MCF 10A (cell line): ENCODE measurements at regions of chr3 and their contacts with region 1.

Region 1: GRCh38 chr3:56988458-56989168 is 71.9 kb upstream of the SPATA12 start:
- DNase-seq: peak; percentile 83
- H3K4me3 Mint-ChIP-seq: no peak overlapping the region
- H3K27ac Mint-ChIP-seq: no peak overlapping the region
- H3K4me1 Mint-ChIP-seq: no peaks in the 10 kb centered on the region
- H3K27me3 Mint-ChIP-seq: no peaks in the 10 kb centered on the region
- CTCF ChIP-seq: peak; percentile 81

Region 2: GRCh38 chr3:56339671-56340070 is 648.9 kb before region 1 on chr3:
- CTCF ChIA-PET with region 1: interaction called, 4 read pairs
- POLR2A ChIA-PET with region 1: no interaction called
- intact Hi-C with region 1: loop called (anchors 2 kb)
- DNase-seq: no peak
- H3K4me3 Mint-ChIP-seq: no peak overlapping the region
- H3K27ac Mint-ChIP-seq: no peak overlapping the region
- H3K4me1 Mint-ChIP-seq: peaks cover 6% of the 10 kb centered on the region
- H3K27me3 Mint-ChIP-seq: peaks cover 24% of the 10 kb centered on the region
- CTCF ChIP-seq: no peak

Region 3: GRCh38 chr3:56702490-56703315 is 285.9 kb before region 1 on chr3:
- CTCF ChIA-PET with region 1: interaction called, 234 read pairs
- POLR2A ChIA-PET with region 1: interaction called, 20 read pairs
- intact Hi-C with region 1: loop called (anchors 1 kb)
- DNase-seq: peak; percentile 77
- H3K4me3 Mint-ChIP-seq: no peak overlapping the region
- H3K27ac Mint-ChIP-seq: no peak overlapping the region
- H3K4me1 Mint-ChIP-seq: no peaks in the 10 kb centered on the region
- H3K27me3 Mint-ChIP-seq: no peaks in the 10 kb centered on the region
- CTCF ChIP-seq: peak; percentile 75

Region 4: DNA sequence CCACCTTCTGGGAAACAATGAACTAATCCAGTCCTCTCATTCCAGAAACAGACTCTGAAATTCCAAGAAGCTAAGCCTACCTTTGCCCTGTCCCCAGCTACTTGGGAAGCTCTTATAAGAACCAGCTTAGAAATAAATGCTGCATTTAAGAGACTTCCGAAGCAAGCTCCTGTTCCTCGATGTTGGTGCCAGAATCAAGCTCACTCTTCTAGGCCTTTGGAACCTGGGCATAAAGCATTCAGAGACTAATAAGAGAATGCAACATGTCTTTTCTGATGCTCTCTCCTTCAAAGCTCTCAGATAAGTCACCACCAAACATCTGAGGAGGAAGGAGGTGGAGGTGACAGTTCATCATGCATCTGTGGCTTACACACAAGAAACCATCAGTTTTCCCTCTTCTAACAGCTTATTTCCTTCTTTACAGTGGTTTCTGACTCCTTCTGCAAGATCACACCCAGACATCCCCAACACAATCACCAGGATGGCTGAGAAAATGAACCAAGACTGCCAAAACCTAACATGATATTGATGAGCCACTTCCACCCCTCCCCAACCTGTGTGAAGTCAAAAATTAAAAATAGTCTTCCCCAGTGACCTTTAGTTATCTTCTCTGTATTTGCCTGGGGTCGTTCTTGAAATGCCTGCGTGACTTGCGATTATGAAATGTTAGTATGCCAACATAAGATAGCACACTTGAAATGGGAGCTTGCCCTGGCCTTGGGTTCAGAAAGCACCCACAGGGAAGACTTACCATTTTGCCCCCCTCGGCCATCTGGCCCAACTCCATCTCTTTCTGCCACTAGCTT is 198.4 kb before region 1 on chr3:
- CTCF ChIA-PET with region 1: interaction called, 170 read pairs
- POLR2A ChIA-PET with region 1: no interaction called
- intact Hi-C with region 1: no loop called
- DNase-seq: no peak
- H3K4me3 Mint-ChIP-seq: no peak overlapping the region
- H3K27ac Mint-ChIP-seq: no peak overlapping the region
- H3K4me1 Mint-ChIP-seq: peaks cover 25% of the 10 kb centered on the region
- H3K27me3 Mint-ChIP-seq: no peaks in the 10 kb centered on the region
- CTCF ChIP-seq: no peak

Region 5: DNA sequence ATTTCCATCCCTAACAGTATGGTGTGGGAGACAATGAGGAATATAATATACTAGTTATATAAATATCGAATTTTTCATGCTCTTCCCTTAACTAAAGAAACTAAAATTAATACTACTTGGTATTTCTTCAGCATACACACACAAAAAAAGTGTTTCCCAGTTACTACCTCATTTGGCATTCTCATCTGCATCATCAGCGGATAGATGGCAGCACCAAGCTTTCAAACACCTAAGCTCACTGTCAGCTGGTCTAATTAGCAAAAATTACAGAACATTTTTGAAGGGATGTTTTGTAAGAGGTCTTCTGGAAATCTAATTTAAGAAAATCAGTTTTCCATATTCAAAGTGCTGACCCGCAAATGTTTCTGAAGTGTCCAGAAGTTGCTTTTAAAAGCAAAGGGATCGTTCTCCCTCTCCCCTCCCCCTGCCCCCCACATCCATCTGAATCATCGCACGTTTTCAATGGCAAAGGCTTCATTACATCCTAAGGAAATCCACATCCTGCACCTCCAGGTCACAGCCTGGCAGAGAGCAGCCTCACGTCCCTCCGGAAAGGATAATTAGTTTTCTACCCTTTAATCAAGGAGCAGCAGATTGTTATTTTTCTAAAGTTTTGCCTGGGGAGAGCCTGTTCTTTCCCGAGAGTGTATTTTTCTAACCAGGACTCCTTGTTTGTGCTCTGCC is 14.2 kb before region 1 on chr3:
- CTCF ChIA-PET with region 1: interaction called, 17 read pairs
- POLR2A ChIA-PET with region 1: no interaction called
- intact Hi-C with region 1: no loop called
- DNase-seq: no peak
- H3K4me3 Mint-ChIP-seq: no peak overlapping the region
- H3K27ac Mint-ChIP-seq: no peak overlapping the region
- H3K4me1 Mint-ChIP-seq: peaks cover 5% of the 10 kb centered on the region
- H3K27me3 Mint-ChIP-seq: no peaks in the 10 kb centered on the region
- CTCF ChIP-seq: no peak